ENCODE measurements at regions of chr17 and their contacts with region 1.

Region 1: DNA sequence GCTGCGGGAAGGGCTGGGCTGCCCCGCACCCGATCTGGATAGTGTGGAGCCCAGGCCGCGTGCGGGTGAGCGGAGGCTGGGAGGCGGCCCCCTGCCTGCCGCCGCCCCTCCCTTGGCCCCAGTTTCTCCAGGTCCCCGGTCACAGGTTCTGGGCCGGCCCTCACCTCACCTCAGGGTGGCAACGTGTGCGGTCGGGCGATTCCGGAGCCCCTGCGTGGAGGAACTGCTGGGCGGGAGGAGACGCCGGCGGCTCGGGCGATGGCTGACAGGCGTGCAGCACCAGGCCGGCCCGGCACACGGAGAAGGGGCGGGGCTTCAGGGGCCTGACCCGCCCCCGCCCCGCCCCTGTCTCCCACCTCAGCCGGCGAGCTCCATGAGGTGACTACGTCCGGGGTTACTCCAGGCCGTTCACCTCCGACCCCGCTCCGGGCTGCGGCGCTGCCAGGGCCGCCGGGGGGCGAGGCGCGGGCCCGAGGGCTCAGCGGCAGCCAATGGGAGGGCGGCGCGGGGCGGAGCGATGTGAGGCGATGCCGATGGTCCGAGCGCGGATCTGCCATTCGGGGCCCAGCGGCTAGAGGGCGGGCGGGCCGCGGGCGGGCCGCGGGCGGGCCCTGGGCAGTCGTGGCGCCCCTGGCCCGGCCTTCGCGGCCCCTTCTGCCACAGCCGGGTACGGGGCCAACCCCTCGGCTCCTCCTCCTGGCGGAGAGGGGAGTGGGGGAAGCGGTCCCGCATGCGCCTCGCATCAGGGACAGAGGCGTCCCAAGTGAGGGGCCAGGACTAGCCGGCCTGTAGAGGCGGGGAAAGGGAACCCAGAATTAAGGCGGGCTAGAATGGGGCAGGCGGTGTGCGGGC is 16.7 kb upstream of the C17orf78 start:
- DNase-seq: peak; percentile 86 to 97 (median 92)
- H3K4me3 ChIP-seq: peak overlapping the region; percentile 63 to 97 (median 88)
- H3K27ac ChIP-seq: peak overlapping the region; percentile 18 to 97 (median 92)
- H3K27me3 ChIP-seq: no peaks in the 10 kb centered on the region
- CTCF ChIP-seq: peak in 46 of 56 donors; percentile 9 to 73 (median 45)

Region 2: DNA sequence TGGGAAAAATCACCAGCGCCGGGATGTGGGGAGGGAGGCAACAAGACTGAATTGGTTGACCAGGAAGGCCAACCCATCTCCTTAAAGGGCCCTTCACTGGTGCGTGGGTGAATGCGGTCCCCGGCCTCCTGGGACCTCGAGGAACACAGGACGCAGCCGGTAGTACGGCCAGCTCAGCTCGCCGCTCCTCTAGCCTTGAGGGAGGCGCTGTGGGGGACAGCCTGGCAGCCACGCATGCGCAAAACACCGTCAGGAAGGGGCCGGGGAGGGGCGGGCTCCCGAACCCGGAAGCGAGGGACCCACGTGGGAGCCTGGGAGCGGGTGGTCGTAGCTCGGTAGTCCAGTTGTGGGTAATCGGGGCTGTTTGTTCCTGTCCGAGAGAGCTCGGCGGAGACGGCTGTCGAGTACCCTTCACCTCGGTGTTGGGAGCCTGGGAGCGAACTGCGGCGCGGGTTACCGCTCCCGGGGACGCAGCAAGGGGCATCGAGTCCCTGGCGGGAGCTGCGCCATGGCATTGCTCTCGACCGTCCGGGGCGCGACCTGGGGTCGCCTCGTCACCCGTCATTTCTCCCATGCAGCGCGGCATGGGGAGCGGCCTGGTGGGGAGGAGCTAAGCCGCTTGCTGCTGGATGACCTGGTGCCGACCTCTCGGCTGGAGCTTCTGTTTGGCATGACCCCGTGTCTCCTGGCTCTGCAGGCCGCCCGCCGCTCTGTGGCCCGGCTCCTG is 757.6 kb before region 1 on chr17 and contains the start of gene MRM1:
- intact Hi-C with region 1: loop called in 1 of 2 experiments (anchors 10 kb)
- DNase-seq: peak; percentile 89 to 95 (median 94)
- H3K4me3 ChIP-seq: peak within 1 kb of the TSS; percentile 61 to 100 (median 96)
- H3K27ac ChIP-seq: peak within 1 kb of the TSS in 56 of 59 donors; percentile 9 to 88 (median 76)
- H3K27me3 ChIP-seq: no peaks in the 10 kb centered on the region
- CTCF ChIP-seq: peak in 53 of 56 donors; percentile 23 to 74 (median 57)
- total RNA-seq, gene MRM1: 4.4 to 12.1 (median 8.0) TPM

Region 3: DNA sequence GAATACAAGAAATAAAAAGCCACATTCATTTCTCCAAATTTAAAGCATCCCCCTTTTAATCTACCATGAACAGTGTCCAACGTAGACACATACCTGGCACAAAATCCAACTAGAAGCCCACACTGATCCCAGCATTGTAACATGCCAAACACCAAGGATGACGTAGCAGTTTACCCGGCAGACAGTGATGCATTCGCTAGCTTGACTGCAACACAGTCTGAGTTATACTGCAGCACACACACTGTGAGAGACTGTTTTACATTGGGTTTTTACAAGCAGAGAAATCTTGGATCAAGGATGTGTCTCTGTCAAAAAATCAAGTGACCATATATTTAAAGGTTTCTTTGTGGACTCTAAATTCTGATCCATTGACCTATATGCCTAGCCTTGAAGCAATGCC is 57.8 kb before region 1 on chr17:
- intact Hi-C with region 1: loop called in 1 of 2 experiments (anchors 5 kb)
- DNase-seq: peak in 6 of 10 donors; percentile 44 to 62 (median 48)
- H3K4me3 ChIP-seq: peak overlapping the region in 58 of 59 donors; percentile 9 to 61 (median 41)
- H3K27ac ChIP-seq: peak overlapping the region in 57 of 59 donors; percentile 1 to 88 (median 73)
- H3K27me3 ChIP-seq: no peaks in the 10 kb centered on the region
- CTCF ChIP-seq: no peak

Region 4: DNA sequence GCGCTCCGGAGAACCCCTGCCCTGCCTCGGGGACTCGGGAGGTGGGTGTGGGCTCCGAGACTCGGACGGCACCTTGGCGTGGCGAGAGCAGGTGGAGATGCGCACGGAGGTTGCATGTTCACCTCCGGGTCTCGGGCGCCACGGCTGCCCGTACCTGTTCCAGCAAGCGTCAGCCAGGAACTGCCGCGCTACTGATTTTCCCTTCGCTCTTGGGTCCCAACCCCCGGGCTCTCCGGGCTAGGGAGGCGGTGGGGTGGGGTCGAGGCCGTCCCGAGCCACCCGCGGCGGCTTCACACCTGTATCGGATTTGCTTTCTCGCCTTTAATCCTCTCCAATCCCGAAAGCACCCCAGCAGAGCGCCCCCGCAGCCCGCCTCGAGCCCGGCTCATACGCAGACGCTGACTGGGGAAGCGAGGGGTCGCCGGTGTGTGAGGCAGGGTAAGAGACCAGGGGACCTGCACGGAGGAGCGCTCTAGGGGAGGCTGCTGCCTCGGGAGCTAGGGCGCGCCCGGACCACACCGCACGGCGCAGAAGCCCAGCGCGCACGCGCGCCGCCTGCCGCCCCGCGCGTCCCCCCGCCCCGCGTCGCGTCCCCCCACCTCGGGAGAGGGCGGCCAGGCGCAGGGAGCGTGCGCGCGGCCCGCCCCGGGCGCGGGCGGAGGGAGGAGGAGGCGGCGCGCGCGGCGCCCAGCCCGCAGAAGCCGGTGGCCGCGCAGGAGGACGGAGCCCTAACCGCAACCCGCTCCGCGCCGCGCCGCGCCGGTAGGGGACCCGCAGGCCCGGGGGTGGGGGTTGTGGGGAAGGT is 130.3 kb after region 1 on chr17 and contains the start of gene DUSP14:
- intact Hi-C with region 1: loop called in 1 of 2 experiments (anchors 5 kb)
- DNase-seq: peak; percentile 52 to 90 (median 74)
- H3K4me3 ChIP-seq: peak within 1 kb of the TSS; percentile 70 to 100 (median 94)
- H3K27ac ChIP-seq: peak within 1 kb of the TSS; percentile 6 to 97 (median 88)
- H3K27me3 ChIP-seq: no peaks in the 10 kb centered on the region
- CTCF ChIP-seq: peak in 6 of 56 donors; percentile 1 to 14 (median 8)
- total RNA-seq, gene DUSP14: 9.8 to 30.5 (median 19.3) TPM

Region 5: DNA sequence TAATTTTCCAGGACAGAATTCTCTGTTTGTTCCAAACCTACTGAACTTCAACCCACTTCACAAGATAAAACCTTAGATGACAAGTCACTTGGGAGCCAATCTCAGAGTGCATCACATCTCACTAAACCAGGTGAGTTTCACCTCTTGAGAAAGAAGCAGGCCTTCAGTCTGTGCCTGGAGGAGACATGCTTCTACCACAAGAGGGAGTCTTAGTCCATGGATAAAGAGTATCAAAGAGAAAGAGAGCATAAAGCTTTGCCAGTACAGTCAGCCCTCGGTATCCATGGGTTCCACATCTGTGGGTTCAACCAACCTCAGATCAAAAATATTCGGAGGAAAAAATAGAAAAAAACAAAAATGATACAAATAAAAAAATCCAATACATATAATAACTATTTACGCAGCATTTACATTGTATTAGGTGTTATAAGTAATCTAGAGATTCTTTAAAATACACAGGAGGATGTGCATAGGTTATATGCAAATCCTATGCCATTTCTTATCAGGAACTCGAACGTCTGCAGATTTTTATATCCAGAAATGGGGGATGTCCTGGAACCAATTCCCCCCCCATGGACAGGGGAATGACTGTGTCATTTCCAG is 168.3 kb after region 1 on chr17:
- intact Hi-C with region 1: no loop called
- DNase-seq: peak in 2 of 10 donors; percentile 21 to 37
- H3K4me3 ChIP-seq: no peak overlapping the region
- H3K27ac ChIP-seq: no peak overlapping the region
- H3K27me3 ChIP-seq: no peaks in the 10 kb centered on the region
- CTCF ChIP-seq: peak in 55 of 56 donors; percentile 28 to 79 (median 64)

Region 6: GRCh38 chr17:37609170-37610040 is 250.3 kb after region 1 on chr17 and contains the start of gene SYNRG:
- intact Hi-C with region 1: loop called in 1 of 2 experiments (anchors 10 kb)
- DNase-seq: peak; percentile 94 to 99 (median 98)
- H3K4me3 ChIP-seq: peak within 1 kb of the TSS; percentile 62 to 100 (median 94)
- H3K27ac ChIP-seq: peak within 1 kb of the TSS; percentile 70 to 99 (median 93)
- H3K27me3 ChIP-seq: no peaks in the 10 kb centered on the region
- CTCF ChIP-seq: peak in 54 of 56 donors; percentile 32 to 77 (median 59)
- total RNA-seq, gene SYNRG: 40.6 to 67.2 (median 51.6) TPM